Caco-2 (cell line): ENCODE measurements at regions of chr5 and their contacts with region 1.

Region 1: DNA sequence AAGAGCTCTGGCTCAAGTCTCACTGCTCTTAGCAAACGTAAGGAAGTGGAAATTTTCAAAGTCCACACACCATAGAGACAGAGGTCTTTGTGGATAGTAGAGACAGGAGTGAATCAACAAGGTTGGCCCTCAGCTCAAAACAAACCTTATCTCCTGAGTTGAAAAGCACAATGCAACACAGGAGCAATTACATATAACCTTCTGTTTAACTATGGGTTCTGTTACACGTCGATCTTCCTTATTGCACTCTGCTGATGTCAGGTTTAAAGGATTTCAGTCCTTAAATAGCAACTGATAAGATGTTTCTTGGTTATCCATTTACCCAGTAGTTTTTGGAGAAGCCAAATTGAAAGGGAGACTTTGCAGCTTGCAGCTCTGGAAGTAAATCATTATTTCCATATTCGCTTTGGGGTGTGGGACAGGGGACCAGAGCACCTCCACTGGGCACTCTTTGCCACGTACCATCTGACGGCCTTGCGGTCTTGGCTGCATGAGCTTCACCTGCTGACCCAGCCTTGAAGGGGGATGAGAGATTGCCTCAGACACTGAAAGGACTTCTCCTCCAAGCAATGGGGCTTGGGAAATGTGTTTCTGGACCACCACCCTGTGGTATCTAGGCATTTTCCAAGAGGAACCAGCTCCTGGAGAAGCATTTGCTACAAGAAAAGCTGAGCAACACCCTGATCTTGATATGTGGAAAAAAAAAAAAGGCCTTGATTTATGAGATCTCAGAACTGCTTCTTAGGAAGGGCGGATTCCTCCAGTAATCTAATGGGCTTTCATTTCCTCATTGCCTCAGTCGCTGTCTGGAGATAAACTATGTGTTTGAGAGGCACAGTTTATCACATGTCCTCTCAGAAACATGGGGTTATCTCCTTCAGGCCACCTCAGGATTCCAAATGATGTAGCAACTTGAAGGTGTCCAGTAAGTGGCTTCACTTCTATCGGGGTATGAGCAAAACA is 56.2 kb upstream of the ZNF622 start:
- DNase-seq: peak; percentile 82 to 84
- H3K4me3 ChIP-seq: 0 out of 2 replicates have a peak overlapping the region, but pooled peaks have one; percentile 6
- H3K4me3 Mint-ChIP-seq: peak overlapping the region; percentile 59
- H3K27ac Mint-ChIP-seq: peak overlapping the region; percentile 92
- H3K4me1 ChIP-seq: peaks cover 42% of the 10 kb centered on the region
- H3K4me1 Mint-ChIP-seq: peaks cover 45% of the 10 kb centered on the region
- H3K27me3 ChIP-seq: no peaks in the 10 kb centered on the region
- H3K27me3 Mint-ChIP-seq: no peaks in the 10 kb centered on the region
- CTCF ChIP-seq: no peak

Region 2: GRCh38 chr5:16483361-16483760 is 38.4 kb before region 1 on chr5:
- CTCF ChIA-PET with region 1: interaction called, 6 read pairs
- POLR2A ChIA-PET with region 1: interaction called, 4 read pairs
- intact Hi-C with region 1: loop called (anchors 1 kb)
- DNase-seq: peak; percentile 60 to 66
- H3K4me3 ChIP-seq: no peak overlapping the region
- H3K4me3 Mint-ChIP-seq: peak overlapping the region; percentile 42
- H3K27ac Mint-ChIP-seq: peak overlapping the region; percentile 34
- H3K4me1 ChIP-seq: peaks cover 70% of the 10 kb centered on the region
- H3K4me1 Mint-ChIP-seq: peaks cover 51% of the 10 kb centered on the region
- H3K27me3 ChIP-seq: no peaks in the 10 kb centered on the region
- H3K27me3 Mint-ChIP-seq: no peaks in the 10 kb centered on the region
- CTCF ChIP-seq: no peak

Region 3: DNA sequence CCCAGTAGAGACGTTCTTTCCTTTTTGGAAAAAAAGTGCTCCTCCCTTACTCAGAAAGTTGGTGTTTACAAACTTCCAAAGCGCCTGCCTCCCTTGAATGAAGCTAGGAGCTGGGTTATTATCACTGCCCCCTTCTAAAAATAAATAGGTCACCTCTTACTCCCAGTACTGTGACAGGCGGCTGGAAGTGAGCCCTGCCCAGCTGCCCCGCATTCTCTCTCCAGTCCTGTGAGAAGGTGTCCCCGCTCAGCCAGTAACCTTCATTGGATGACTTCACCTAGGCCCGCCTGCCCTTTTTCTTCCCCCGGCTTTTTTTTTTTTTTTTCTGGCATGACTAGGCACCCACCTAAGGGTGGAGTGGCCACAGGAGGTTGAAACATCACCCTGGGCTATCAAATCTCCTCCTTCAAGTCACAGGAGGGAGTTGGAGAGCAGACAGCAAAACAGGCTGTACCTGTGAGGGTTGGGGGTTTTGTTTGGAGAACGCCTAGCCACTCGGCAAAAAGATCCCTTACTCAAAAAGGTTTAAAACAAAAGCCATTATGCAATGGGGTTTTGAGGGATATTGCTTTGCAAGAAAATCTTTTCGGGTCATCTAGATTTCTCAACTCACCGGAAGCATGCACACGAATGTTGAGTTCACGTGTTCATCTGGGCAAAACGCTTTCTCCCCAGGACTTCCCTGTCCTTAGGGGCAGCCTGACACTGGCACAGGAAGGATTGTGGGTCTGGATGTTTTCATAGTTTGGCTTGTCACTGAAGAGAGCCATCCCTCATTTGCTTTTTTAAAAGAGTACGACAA is 12.9 kb before region 1 on chr5:
- CTCF ChIA-PET with region 1: no interaction called
- POLR2A ChIA-PET with region 1: interaction called, 18 read pairs
- intact Hi-C with region 1: loop called (anchors 1 kb)
- DNase-seq: peak; percentile 56 to 60
- H3K4me3 ChIP-seq: no peak overlapping the region
- H3K4me3 Mint-ChIP-seq: peak overlapping the region; percentile 46
- H3K27ac Mint-ChIP-seq: peak overlapping the region; percentile 59
- H3K4me1 ChIP-seq: peaks cover 31% of the 10 kb centered on the region
- H3K4me1 Mint-ChIP-seq: peaks cover 29% of the 10 kb centered on the region
- H3K27me3 ChIP-seq: no peaks in the 10 kb centered on the region
- H3K27me3 Mint-ChIP-seq: no peaks in the 10 kb centered on the region
- CTCF ChIP-seq: no peak

Region 4: DNA sequence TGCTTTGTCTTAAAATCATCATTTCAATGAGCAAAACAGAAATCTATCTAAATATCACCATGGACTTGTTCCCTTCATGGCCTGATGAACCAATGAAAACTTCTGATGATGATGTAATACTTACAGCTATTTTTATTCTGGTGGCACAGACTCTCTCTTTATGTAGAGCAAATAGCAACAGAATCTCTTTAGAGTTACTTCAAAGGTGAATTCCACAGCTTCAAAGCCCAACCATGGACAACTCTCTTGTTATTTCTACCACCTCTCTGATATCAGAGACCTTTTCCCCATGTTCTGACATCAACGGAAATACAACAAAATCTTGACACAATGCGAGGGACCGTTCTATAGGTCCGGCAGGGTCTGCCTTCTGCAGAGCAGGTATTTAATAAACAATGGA is 24.9 kb after region 1 on chr5:
- CTCF ChIA-PET with region 1: interaction called, 15 read pairs
- POLR2A ChIA-PET with region 1: interaction called, 6 read pairs
- intact Hi-C with region 1: loop called (anchors 1 kb)
- DNase-seq: peak in 1 of 2 experiments; percentile 48
- H3K4me3 ChIP-seq: no peak overlapping the region
- H3K4me3 Mint-ChIP-seq: peak overlapping the region; percentile 10
- H3K27ac Mint-ChIP-seq: peak overlapping the region; percentile 84
- H3K4me1 ChIP-seq: peaks cover 59% of the 10 kb centered on the region
- H3K4me1 Mint-ChIP-seq: peaks cover 65% of the 10 kb centered on the region
- H3K27me3 ChIP-seq: no peaks in the 10 kb centered on the region
- H3K27me3 Mint-ChIP-seq: no peaks in the 10 kb centered on the region
- CTCF ChIP-seq: no peak

Region 5: GRCh38 chr5:16585041-16585667 is 63.4 kb after region 1 on chr5:
- CTCF ChIA-PET with region 1: no interaction called
- POLR2A ChIA-PET with region 1: interaction called, 3 read pairs
- intact Hi-C with region 1: loop called (anchors 1 kb)
- DNase-seq: peak; percentile 83 to 91
- H3K4me3 ChIP-seq: no peak overlapping the region
- H3K4me3 Mint-ChIP-seq: peak overlapping the region; percentile 58
- H3K27ac Mint-ChIP-seq: peak overlapping the region; percentile 86
- H3K4me1 ChIP-seq: peaks cover 50% of the 10 kb centered on the region
- H3K4me1 Mint-ChIP-seq: peaks cover 52% of the 10 kb centered on the region
- H3K27me3 ChIP-seq: no peaks in the 10 kb centered on the region
- H3K27me3 Mint-ChIP-seq: no peaks in the 10 kb centered on the region
- CTCF ChIP-seq: peak; percentile 40 to 79

Region 6: GRCh38 chr5:17169507-17169906 is 647.7 kb after region 1 on chr5:
- CTCF ChIA-PET with region 1: no interaction called
- POLR2A ChIA-PET with region 1: no interaction called
- intact Hi-C with region 1: loop called (anchors 1 kb)
- DNase-seq: peak; percentile 48 to 70
- H3K4me3 ChIP-seq: no peak overlapping the region
- H3K4me3 Mint-ChIP-seq: no peak overlapping the region
- H3K27ac Mint-ChIP-seq: peak overlapping the region; percentile 24
- H3K4me1 ChIP-seq: peaks cover 26% of the 10 kb centered on the region
- H3K4me1 Mint-ChIP-seq: peaks cover 31% of the 10 kb centered on the region
- H3K27me3 ChIP-seq: no peaks in the 10 kb centered on the region
- H3K27me3 Mint-ChIP-seq: no peaks in the 10 kb centered on the region
- CTCF ChIP-seq: no peak